Esophagus squamous epithelium (tissue), 5 donors: ENCODE measurements at regions of chr21 and their contacts with region 1.

Region 1: DNA sequence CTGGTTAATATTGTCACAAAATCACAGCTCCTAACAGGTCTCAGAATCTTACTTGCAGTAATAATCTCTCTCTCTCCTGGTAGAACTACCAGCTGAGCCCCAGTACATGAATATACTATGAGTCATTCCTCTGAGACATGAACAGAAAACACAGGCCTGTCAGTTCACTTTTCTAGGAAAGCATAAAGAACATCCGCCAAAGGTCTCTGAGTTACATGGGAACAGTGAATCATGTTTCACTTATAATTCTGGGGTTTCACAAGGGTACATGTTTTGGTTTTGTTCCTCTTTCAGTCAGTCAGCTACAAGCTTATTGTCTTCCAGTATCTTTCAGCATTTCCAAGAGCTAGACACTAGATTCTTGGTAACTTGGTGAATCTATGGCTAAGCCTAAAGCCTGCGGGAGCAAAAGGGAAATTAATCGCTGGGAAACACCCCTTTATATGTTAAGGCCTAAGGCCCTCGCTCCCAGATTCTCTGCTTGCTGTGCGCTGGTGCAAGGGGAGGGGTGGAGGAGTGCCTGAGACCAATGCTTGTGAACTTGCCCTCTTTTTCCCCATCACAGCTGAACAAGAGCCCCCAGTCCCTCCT is 31.7 kb downstream of the IFNGR2 start:
- DNase-seq: no peak
- H3K4me3 ChIP-seq: peak overlapping the region in 1 of 4 donors; percentile 9
- H3K27ac ChIP-seq: peak overlapping the region; percentile 78 to 96 (median 94)
- H3K4me1 ChIP-seq: peaks cover 21 to 53% (median 23%) of the 10 kb centered on the region in 3 donors
- H3K27me3 ChIP-seq: no peaks in the 10 kb centered on the region
- CTCF ChIP-seq: no peak
- POLR2A ChIP-seq: no peak

Region 2: GRCh38 chr21:33151941-33152731 is 282.7 kb before region 1 on chr21:
- intact Hi-C with region 1: no loop called
- DNase-seq: no peak
- H3K4me3 ChIP-seq: no peak overlapping the region
- H3K27ac ChIP-seq: no peak overlapping the region
- H3K4me1 ChIP-seq: no peaks in the 10 kb centered on the region
- H3K27me3 ChIP-seq: peaks cover 0 to 88% (median 0%) of the 10 kb centered on the region in 4 donors
- CTCF ChIP-seq: no peak
- POLR2A ChIP-seq: no peak

Region 3: GRCh38 chr21:33229784-33230544 is 204.9 kb before region 1 on chr21 and contains the start of gene IFNAR2:
- intact Hi-C with region 1: no loop called
- DNase-seq: no peak
- H3K4me3 ChIP-seq: peak within 1 kb of the TSS; percentile 79 to 99 (median 88)
- H3K27ac ChIP-seq: peak within 1 kb of the TSS; percentile 86 to 98 (median 92)
- H3K4me1 ChIP-seq: peaks cover 6 to 49% (median 14%) of the 10 kb centered on the region in 3 donors
- H3K27me3 ChIP-seq: no peaks in the 10 kb centered on the region
- CTCF ChIP-seq: no peak
- POLR2A ChIP-seq: peak in 2 of 4 donors; percentile 55 to 84
- total RNA-seq, gene IFNAR2: 4.0 to 13.3 (median 7.0) TPM

Region 4: DNA sequence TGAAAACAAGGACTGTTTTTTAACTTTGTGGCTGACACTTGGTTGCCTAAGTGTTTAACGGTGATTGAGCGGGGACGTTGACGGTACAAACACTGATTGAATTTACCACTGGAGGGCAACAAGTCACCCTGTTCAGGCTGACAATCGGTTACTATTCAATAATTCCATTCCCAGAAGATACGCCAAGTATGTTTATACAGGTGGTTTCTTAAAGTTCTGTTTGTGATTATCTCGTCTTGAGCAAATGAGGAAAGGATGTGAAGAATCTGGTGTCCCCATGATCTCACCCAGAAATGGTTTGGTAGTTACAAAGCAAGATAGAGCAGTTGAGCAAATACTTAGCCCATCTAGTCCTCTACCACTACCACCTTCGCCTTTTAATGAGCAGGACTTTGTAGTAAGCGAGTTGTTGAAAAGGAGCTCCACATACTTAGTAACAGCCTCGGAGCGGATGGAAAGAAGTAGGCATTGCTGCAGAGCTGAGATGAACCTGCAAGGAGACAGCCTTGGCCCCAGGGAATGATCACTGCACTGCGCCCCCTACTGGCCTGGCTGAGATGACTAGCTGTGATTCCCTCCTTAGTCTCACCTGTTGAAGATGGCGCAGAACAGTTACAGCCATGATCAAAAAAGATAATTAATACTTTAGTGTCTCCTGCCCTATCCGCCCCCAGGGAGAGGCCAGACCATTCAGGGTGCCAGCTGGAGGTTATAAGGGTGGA is 73.8 kb before region 1 on chr21:
- intact Hi-C with region 1: loop called (anchors 10 kb)
- DNase-seq: no peak
- H3K4me3 ChIP-seq: peak overlapping the region in 3 of 4 donors; percentile 13 to 50 (median 22)
- H3K27ac ChIP-seq: peak overlapping the region; percentile 54 to 81 (median 70)
- H3K4me1 ChIP-seq: peaks cover 20 to 33% (median 25%) of the 10 kb centered on the region in 3 donors
- H3K27me3 ChIP-seq: no peaks in the 10 kb centered on the region
- CTCF ChIP-seq: peak; percentile 65 to 94 (median 84)
- POLR2A ChIP-seq: no peak

Region 5: DNA sequence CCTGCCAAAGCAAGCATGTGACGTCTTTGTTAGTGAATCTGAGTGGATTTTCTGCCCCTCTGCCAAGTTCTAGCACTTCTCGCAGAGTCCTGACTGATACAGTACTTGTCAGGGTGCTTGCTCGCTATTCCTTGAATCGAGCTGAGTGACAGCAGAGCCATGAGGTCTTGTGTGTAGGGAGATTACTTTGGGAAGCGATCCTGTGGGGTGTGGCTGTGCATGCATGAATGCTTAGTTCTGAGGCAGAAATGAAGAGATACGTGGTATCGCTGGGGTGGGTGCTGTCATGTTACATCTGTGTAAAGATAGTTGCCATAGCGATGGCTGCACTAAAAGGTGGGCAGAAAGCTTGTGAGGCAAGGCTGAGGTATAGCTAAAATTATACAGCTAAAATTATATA is 76.0 kb after region 1 on chr21:
- intact Hi-C with region 1: no loop called
- DNase-seq: no peak
- H3K4me3 ChIP-seq: no peak overlapping the region
- H3K27ac ChIP-seq: no peak overlapping the region
- H3K4me1 ChIP-seq: no peaks in the 10 kb centered on the region
- H3K27me3 ChIP-seq: no peaks in the 10 kb centered on the region
- CTCF ChIP-seq: no peak
- POLR2A ChIP-seq: no peak

Region 6: GRCh38 chr21:33641336-33642026 is 206.6 kb after region 1 on chr21 and contains the start of gene CRYZL1:
- intact Hi-C with region 1: no loop called
- DNase-seq: peak; percentile 99
- H3K4me3 ChIP-seq: peak within 1 kb of the TSS; percentile 81 to 97 (median 90)
- H3K27ac ChIP-seq: peak within 1 kb of the TSS; percentile 90 to 96 (median 93)
- H3K4me1 ChIP-seq: peaks cover 14 to 52% (median 16%) of the 10 kb centered on the region in 3 donors
- H3K27me3 ChIP-seq: no peaks in the 10 kb centered on the region
- CTCF ChIP-seq: no peak
- POLR2A ChIP-seq: peak in 1 of 4 donors; percentile 78
- total RNA-seq, gene CRYZL1: 7.9 to 25.7 (median 15.3) TPM